ENCODE measurements at regions of chr9 and their contacts with region 1.

Region 1: GRCh38 chr9:89878687-89879086 is 273.9 kb downstream of the GADD45G start:
- DNase-seq: peak; percentile 81
- ATAC-seq: peak; percentile 86

Region 2: DNA sequence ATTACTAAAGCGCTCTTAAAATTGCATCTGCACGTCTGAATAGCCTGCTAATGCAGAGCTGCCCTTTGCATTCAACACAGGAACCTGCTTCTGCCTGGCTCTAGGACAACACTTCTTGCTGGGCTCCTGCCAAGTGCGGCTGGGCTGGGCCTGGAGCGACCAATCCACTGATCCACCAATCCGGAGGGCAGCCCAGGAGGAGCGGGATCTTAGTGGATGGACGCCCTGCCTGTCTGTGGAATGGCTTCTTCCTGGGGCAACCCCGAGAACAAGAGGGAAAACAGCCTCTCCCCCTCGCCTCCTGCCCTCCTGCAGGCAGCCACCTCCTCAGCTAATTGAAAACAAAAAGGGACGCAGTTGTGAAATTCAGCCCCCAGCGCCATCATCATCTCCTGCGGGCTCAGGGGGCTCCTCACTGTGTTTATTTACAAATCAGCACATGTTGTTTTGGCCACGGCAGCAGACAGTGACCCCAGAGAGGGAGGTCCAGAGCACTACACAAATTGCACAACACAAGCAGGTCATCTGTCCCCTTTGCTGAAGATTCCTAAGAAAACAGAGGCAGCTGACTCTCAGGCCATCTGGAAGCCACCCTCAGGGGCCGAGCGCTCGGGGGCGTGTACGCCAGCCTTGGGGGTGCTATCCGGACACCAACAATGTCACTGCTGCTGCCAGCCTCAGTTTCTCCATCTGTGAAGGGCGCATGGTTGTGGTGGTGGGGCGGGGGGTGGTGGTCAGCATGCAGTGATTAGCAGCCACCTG is 216.6 kb before region 1 on chr9:
- intact Hi-C with region 1: loop called (anchors 5 kb)
- DNase-seq: peak; percentile 97
- ATAC-seq: peak; percentile 93

Region 3: GRCh38 chr9:89684901-89685636 is 193.6 kb before region 1 on chr9:
- intact Hi-C with region 1: loop called (anchors 5 kb)
- DNase-seq: peak; percentile 82
- ATAC-seq: peak; percentile 90

Region 4: DNA sequence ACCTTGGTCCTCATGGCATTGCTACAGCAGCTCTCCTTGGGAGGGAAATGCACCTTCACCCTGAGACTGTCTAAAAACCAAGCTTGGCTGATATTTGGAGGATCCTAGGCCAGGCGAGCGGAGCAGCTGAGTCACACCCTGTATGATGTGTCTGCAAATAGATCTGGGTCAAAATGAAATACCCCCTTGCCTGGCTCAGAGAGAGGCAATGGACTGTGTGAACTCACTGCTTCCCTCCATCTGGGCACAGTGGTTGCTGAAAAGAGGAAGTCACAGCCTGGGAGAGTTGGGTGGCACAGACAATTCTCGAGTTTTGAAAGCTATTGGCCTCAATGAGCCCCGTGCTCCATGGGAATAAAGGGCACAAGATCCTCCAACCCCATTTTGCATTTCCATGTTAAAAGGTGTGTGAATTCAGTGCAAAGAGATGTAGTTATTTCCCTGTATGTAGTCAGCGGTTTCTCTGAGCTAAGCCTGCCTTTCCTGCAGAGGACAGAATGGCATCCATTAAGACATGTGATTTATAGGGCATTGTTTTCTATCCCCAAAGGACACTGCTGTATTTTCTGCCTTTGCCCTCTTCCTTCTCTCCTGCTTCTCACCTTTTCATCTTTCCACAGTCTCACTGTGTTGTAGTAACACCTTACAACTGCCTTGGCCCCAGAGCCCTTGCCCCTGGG is 96.7 kb before region 1 on chr9:
- intact Hi-C with region 1: no loop called
- DNase-seq: no peak
- ATAC-seq: peak; percentile 17

Region 5: DNA sequence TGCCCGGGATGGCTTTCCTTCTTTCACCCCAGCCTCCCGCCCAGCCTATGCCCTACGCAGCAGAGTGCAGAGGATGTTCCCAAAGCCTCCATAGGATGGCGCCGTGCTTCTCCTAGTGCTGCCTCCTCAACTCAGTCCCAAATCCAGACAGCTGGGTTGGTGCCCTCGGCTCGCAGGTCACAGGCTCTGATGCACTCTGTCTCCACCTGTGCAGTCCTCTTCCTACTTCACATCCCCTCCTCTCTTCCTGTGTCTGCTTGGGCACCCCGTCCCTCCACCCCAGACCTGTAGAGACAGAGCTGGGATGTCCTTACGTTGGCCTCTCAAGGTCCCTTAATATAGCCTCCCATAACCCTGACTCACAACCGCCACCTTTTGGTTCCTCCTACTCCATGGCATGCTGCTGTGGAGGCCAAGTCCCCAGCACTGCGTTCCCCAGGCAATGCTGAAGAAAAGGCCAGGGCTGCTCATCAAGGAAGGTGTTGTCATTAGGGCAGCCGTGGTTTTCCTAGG is 40.5 kb after region 1 on chr9:
- intact Hi-C with region 1: loop called (anchors 5 kb)
- DNase-seq: no peak
- ATAC-seq: peak; percentile 91

Region 6: GRCh38 chr9:89999534-90000370 is 121.1 kb after region 1 on chr9:
- intact Hi-C with region 1: loop called (anchors 5 kb)
- DNase-seq: peak; percentile 80
- ATAC-seq: peak; percentile 88

Region 7: GRCh38 chr9:90102292-90102901 is 223.7 kb after region 1 on chr9:
- intact Hi-C with region 1: loop called (anchors 5 kb)
- DNase-seq: peak; percentile 80
- ATAC-seq: peak; percentile 83

Measured in Right ventricle myocardium inferior (tissue), 1 donor.